ENCODE measurements at regions of chr18 and their contacts with region 1.

Region 1: GRCh38 chr18:48663931-48664847 is 125.4 kb downstream of the CTIF start:
- DNase-seq: peak; percentile 52 to 86
- H3K4me3 ChIP-seq: no peak overlapping the region
- H3K27ac ChIP-seq: no peak overlapping the region
- H3K4me1 ChIP-seq: peaks cover 0 to 44% (median 26%) of the 10 kb centered on the region in 4 donors
- H3K27me3 ChIP-seq: no peaks in the 10 kb centered on the region
- CTCF ChIP-seq: peak; percentile 87 to 89

Region 2: DNA sequence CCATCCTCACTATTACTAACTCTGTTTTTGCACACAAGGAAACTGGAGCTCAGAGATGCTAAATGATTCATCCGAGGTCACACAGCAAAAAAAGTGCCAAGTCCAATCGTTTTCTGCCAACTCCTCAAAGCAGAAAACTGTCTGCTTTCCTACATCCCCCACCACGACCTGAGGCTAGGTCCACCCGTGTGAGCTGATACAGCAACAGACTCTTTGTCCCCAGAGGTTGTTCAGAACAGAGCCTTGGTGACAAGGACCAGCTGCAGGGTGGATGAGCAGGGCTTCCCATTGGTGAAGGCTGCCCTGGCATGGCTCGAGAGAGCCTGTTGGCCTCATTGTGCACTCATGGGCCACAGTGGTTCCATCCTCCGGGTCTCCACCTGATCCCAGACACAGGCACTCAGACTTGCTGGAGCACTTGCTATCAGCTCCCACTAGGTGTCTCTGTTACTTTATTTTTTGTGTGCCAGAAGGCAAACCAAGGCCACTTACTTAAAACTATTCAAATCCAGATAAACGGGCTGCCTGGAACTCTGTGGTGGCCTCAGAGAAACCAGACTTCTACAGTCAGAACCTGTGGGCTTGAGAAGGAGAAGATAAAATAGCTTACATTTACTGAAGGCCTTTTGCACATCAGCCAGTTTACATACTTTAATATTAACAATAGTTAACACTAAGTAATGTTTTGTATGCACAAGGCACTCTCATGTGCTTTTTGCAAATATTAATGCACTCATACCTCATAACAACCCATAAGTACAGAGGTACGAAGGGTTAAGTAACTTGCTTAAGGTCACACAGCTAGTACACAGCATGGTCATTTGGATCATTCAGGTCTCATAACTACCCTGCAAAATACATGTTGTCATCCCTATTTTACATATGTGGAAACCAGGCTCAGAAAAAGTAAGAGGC is 188.3 kb before region 1 on chr18:
- intact Hi-C with region 1: loop called (anchors 1 kb)
- DNase-seq: peak; percentile 44 to 73
- H3K4me3 ChIP-seq: no peak overlapping the region
- H3K27ac ChIP-seq: no peak overlapping the region
- H3K4me1 ChIP-seq: peaks cover 0 to 3% (median under 1%) of the 10 kb centered on the region in 4 donors
- H3K27me3 ChIP-seq: no peaks in the 10 kb centered on the region
- CTCF ChIP-seq: peak; percentile 85 to 90

Region 3: DNA sequence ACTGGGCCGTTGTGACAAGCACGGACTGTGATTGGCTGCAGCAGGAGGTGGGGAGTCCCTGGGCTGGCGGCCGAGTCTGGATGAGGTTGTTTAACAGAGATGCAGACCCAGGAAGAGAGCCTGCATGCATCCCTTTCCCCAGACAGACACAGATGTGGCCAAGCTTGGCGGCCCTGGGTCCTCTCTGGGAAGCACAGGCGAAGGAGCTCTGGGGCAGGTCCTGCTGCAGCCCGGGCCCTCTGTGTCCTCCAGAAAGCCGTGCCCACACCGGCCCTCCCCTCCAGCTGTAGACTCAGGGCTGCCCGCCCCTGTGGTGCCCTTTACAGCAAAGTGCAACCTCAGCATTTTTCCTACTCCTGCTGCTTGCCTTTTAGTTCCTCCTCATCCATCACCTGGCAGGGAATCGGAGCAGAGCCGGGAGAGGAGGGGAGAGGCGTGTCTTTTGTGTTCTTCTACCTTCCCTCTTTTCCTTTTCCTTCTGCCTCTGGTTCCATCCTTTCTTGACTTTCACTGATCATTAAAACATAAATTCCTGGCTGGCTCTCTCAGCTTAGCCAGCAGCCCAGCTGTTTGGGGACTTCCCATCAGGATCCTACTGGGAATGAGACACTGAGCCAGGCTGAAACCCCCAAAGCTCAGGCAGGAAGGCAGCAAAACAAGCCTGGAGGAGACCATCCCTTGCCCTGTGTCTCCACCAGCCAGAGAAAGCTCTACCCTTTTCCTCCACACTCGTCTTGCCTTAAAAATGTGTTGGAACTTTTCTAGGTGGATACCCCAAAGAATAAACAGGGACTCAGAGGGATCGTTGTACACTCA is 50.4 kb before region 1 on chr18:
- intact Hi-C with region 1: loop called (anchors 10 kb)
- DNase-seq: peak; percentile 88 to 92
- H3K4me3 ChIP-seq: peak overlapping the region in 1 of 2 donors; percentile 19
- H3K27ac ChIP-seq: peak overlapping the region; percentile 80 to 83
- H3K4me1 ChIP-seq: peaks cover 0 to 83% (median 73%) of the 10 kb centered on the region in 4 donors
- H3K27me3 ChIP-seq: no peaks in the 10 kb centered on the region
- CTCF ChIP-seq: no peak

Measured in tibial artery (tissue), 4 donors.